Colonic mucosa (tissue), 4 donors: ENCODE measurements at regions of chr2 and their contacts with region 1.

Region 1: GRCh38 chr2:108988796-108989713 is at the start of gene EDAR:
- DNase-seq: peak; percentile 82
- H3K4me3 ChIP-seq: peak within 1 kb of the TSS; percentile 11
- H3K27ac ChIP-seq: no peak within 1 kb of the TSS
- H3K4me1 ChIP-seq: no peaks in the 10 kb centered on the region
- H3K27me3 ChIP-seq: no peaks in the 10 kb centered on the region
- CTCF ChIP-seq: peak; percentile 52
- total RNA-seq, gene EDAR: 0.69 to 1.1 TPM

Region 2: GRCh38 chr2:108927936-108928659 is 61.0 kb before region 1 on chr2:
- intact Hi-C with region 1: loop called (anchors 5 kb)
- DNase-seq: peak; percentile 63
- H3K4me3 ChIP-seq: no peak overlapping the region
- H3K27ac ChIP-seq: no peak overlapping the region
- H3K4me1 ChIP-seq: peaks cover under 1% of the 10 kb centered on the region
- H3K27me3 ChIP-seq: no peaks in the 10 kb centered on the region
- CTCF ChIP-seq: peak; percentile 63